ENCODE measurements at regions of chr18 and their contacts with region 1.

Region 1: GRCh38 chr18:49459404-49460171 is 857 bp downstream of the DYM start:
- DNase-seq: peak; percentile 30
- H3K4me3 ChIP-seq: peak overlapping the region; percentile 92
- H3K27ac ChIP-seq: peak overlapping the region; percentile 51
- H3K4me1 ChIP-seq: peaks cover 36% of the 10 kb centered on the region
- CTCF ChIP-seq: no peak

Region 2: GRCh38 chr18:49447810-49448745 is 11.5 kb before region 1 on chr18:
- CTCF ChIA-PET with region 1: interaction called, 3 read pairs
- POLR2A ChIA-PET with region 1: interaction called, 14 read pairs
- intact Hi-C with region 1: no loop called
- DNase-seq: peak; percentile 56
- H3K4me3 ChIP-seq: no peak overlapping the region
- H3K27ac ChIP-seq: peak overlapping the region; percentile 15
- H3K4me1 ChIP-seq: peaks cover 29% of the 10 kb centered on the region
- CTCF ChIP-seq: peak; percentile 72

Measured in OCI-LY7 (cell line).